ENCODE measurements at regions of chr6 and their contacts with region 1.

Region 1: GRCh38 chr6:51844336-51844735 is 243.1 kb downstream of the PKHD1 start:
- DNase-seq: no peak
- ATAC-seq: no peak
- H3K4me3 ChIP-seq: no peak overlapping the region
- H3K27ac ChIP-seq: no peak overlapping the region
- H3K4me1 ChIP-seq: no peaks in the 10 kb centered on the region; the same call in 1 of the 2 replicates
- H3K27me3 ChIP-seq: 0 out of 5 replicates have a peak, but pooled peaks cover 0 to 1% of the 10 kb centered on the region in 2 experiments
- CTCF ChIP-seq: peak; percentile 43; the same call in 1 of the 2 replicates
- EP300 ChIP-seq: no peak
- POLR2A ChIP-seq: no peak
- RAD21 ChIP-seq: no peak

Region 2: GRCh38 chr6:51472745-51473487 is 371.4 kb before region 1 on chr6:
- CTCF ChIA-PET with region 1: no interaction called
- POLR2A ChIA-PET with region 1: no interaction called
- in situ Hi-C with region 1: no loop called
- intact Hi-C with region 1: no loop called
- DNase-seq: no peak
- ATAC-seq: no peak
- H3K4me3 ChIP-seq: no peak overlapping the region
- H3K27ac ChIP-seq: no peak overlapping the region
- H3K4me1 ChIP-seq: no peaks in the 10 kb centered on the region
- H3K27me3 ChIP-seq: no peaks in the 10 kb centered on the region
- CTCF ChIP-seq: no peak
- EP300 ChIP-seq: no peak
- POLR2A ChIP-seq: no peak
- RAD21 ChIP-seq: no peak

Region 3: DNA sequence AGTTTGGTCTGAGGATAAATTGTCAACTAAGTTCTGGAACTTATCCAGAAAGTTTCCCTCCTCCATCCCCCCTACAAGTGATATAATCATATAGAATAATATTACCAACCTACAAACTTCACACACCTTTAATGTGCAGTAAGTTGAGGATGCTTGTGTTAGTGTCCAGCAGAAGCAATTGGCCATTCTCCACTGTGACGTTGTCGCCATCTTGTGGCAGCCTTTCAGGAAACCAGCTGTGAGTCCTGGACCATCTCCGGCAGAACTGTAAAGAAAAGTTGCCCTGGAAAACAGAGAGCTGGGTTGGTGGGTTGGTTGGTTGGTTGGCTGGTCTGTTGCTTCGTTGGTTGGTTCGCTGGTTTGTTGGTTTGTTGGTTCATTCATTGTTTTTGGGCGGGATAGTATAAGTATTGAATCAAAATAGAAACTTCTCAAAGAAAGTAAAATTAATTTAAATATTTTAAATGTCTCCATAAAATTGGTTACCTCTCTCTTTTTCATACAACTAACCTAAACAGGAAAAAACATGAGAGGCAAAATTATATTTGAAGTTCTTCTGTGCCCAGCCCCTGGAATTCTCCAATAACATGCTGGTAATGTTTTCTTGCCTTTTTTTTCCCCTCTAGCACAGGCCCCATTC is 115.5 kb after region 1 on chr6:
- CTCF ChIA-PET with region 1: no interaction called
- POLR2A ChIA-PET with region 1: no interaction called
- in situ Hi-C with region 1: loop called (anchors 5 kb)
- intact Hi-C with region 1: loop called (anchors 5 kb)
- DNase-seq: peak; percentile 70
- ATAC-seq: peak; percentile 97
- H3K4me3 ChIP-seq: no peak overlapping the region
- H3K27ac ChIP-seq: no peak overlapping the region
- H3K4me1 ChIP-seq: no peaks in the 10 kb centered on the region
- H3K27me3 ChIP-seq: no peaks in the 10 kb centered on the region
- CTCF ChIP-seq: peak; percentile 95
- EP300 ChIP-seq: no peak
- POLR2A ChIP-seq: no peak
- RAD21 ChIP-seq: peak; percentile 74

Measured in HepG2 (cell line).